GM10248 (cell line): ENCODE measurements at regions of chr16 and their contacts with region 1.

Region 1: DNA sequence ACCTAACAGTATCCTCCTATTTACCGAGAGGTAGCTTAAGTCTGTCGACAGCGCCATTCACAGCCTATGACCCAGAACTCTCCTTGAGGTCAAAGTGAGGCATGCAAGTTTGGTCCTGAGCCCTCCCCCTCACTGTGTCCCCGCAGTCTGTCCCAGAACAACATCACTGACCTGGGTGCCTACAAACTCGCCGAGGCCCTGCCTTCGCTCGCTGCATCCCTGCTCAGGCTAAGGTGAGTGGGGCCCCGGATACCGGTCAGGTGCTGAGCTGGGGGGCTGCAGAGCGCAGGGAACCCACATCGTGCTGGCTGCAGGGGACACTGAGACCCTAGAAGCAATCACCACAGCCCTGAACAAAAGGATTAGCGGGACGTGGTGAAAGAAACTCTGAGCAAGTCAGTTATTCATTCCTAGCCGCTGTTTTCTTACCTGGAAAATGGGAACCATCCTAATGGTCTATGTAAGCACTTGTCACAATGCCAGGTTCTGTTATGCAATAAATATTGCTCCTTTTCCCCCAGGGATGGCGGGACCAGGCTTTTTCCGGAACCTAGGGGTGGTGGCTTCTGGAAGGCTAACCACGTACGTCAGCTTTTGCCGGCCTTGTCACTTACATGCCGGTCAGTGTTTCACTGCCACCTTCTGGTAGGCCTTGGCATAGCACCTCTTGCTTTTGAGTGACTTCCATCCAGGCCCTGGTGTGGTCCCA is 23.8 kb downstream of the DEXI start:
- DNase-seq: peak; percentile 81
- CTCF ChIP-seq: peak; percentile 86

Region 2: DNA sequence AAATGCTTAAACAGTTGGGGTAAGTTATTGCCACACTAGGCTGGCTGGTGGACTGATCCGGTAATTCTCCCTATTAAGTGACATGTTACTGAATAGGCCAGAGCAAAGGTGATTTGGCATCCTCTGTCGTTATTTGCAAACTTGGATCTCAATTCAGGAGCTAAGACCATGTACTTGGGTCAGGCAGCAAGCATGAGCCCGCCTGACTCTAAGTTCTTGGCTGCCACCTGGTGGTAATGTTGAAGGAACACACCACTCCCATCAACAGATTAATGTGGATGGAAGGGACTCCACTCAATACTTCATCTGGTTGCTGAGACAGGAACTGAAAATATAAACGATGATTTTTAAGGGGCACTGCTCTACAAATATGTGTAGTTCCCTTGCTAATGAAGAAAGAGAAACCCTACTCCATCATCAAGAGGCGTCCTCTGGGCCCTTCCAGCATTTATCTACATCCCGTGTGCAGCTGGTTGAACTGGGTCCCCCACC is 408.9 kb before region 1 on chr16:
- CTCF ChIA-PET with region 1: interaction called, 28 read pairs
- POLR2A ChIA-PET with region 1: no interaction called
- DNase-seq: peak; percentile 80
- CTCF ChIP-seq: peak; percentile 73

Region 3: DNA sequence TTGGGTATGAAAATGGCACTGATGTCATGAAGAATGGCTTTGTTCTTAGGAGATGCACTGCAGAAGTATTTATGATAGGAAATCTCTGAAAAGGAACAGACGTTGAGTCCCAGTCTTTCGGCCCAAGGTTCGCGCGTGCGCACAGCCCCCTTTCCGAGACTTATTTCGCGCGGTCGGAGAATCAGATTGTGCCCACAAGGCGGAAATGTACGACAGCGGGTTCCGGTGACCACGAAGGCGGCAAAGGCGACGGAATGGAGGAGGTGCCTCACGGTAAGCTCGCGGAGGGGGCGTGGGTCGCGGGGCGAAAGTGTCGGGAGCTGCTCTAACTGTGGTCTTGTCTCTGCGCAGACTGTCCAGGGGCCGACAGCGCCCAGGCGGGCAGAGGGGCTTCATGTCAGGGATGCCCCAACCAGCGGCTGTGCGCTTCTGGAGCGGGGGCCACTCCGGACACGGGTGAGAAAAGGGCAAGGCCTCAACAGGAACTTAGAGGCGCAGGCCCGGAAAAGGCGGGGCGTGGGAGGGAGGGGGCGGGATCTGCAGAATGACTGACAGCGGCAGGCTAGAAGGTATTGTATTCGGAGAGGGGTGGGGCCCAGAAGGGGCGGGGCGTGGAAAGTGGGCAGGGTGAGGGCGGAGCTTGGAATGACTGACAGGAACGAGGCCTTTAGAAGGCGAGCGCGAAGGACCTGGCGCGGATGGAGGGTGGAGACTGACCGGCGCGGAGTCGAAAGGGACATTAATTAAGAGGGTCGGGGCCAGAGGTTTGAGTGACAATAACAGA is 174.6 kb before region 1 on chr16 and contains the start of gene NUBP1:
- CTCF ChIA-PET with region 1: interaction called, 20 read pairs
- POLR2A ChIA-PET with region 1: no interaction called
- DNase-seq: peak; percentile 97
- CTCF ChIP-seq: no peak

Region 4: DNA sequence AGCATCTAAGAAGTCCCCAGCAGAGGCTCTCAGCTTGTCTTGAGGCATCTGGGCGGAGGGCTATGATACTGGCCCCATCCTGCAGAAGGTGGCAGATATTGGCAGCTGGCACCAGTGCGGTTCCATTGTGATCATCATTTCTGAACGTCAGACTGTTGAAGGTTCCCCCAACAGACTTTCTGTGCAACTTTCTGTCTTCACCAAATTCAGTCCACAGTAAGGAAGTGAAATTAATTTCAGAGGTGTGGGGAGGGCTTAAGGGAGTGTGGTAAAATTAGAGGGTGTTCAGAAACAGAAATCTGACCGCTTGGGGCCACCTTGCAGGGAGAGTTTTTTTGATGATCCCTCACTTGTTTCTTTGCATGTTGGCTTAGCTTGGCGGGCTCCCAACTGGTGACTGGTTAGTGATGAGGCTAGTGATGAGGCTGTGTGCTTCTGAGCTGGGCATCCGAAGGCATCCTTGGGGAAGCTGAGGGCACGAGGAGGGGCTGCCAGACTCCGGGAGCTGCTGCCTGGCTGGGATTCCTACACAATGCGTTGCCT is 41.6 kb before region 1 on chr16 and contains the start of gene CIITA:
- CTCF ChIA-PET with region 1: interaction called, 11 read pairs
- POLR2A ChIA-PET with region 1: no interaction called
- DNase-seq: peak; percentile 86
- CTCF ChIP-seq: no peak

Region 5: DNA sequence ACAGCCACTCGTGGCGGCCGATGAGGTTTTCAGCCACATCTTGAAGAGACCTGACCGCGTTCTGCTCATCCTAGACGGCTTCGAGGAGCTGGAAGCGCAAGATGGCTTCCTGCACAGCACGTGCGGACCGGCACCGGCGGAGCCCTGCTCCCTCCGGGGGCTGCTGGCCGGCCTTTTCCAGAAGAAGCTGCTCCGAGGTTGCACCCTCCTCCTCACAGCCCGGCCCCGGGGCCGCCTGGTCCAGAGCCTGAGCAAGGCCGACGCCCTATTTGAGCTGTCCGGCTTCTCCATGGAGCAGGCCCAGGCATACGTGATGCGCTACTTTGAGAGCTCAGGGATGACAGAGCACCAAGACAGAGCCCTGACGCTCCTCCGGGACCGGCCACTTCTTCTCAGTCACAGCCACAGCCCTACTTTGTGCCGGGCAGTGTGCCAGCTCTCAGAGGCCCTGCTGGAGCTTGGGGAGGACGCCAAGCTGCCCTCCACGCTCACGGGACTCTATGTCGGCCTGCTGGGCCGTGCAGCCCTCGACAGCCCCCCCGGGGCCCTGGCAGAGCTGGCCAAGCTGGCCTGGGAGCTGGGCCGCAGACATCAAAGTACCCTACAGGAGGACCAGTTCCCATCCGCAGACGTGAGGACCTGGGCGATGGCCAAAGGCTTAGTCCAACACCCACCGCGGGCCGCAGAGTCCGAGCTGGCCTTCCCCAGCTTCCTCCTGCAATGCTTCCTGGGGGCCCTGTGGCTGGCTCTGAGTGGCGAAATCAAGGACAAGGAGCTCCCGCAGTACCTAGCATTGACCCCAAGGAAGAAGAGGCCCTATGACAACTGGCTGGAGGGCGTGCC is 11.3 kb before region 1 on chr16:
- CTCF ChIA-PET with region 1: interaction called, 37 read pairs
- POLR2A ChIA-PET with region 1: no interaction called
- DNase-seq: no peak
- CTCF ChIP-seq: no peak

Region 6: DNA sequence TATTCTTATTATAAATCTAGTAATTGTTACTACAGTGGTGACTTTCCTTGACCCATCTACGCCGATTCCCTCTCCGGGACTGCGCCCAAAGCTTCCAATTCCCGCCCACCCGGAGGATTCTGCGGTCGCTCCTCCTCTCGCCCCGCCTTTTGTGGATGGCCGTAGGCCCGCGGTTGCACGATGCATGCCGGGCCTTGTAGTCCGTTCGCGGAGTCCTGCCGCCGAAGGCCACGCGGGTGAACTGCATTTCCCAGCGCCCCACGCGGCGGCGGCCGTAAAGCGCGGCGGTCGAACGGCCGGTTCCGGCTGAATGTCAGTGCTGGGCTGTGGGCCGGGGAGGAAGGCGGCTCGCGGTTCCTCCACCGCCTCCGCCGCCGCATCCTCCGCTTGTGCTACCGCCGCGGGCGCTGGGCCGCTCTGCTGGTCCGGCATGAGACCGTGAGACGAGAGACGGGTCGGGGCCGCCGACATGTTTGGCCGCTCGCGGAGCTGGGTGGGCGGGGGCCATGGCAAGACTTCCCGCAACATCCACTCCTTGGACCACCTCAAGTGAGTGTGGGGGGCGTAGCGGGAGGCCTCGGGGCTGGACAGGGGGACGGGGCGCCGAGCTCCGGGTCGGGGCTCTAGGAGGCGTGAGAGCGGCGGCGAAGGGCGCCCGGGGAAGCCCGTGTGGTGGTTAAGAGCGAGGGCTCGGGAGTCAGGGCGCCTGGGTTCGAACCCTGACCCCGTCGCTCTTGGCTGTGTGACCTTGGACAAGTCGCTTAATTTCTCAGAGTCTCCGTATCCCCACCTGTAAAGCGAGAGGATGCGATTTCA is 26.0 kb after region 1 on chr16 and contains the start of gene CLEC16A:
- CTCF ChIA-PET with region 1: interaction called, 11 read pairs
- POLR2A ChIA-PET with region 1: no interaction called
- DNase-seq: peak; percentile 92
- CTCF ChIP-seq: no peak